ENCODE measurements at regions of chr19 and their contacts with region 1.

Region 1: GRCh38 chr19:46828484-46828883 is 22.2 kb downstream of the AP2S1 start:
- DNase-seq: no peak
- ATAC-seq: no peak
- H3K4me3 ChIP-seq: no peak overlapping the region
- H3K27ac ChIP-seq: no peak overlapping the region
- H3K4me1 ChIP-seq: no peaks in the 10 kb centered on the region
- H3K27me3 ChIP-seq: no peaks in the 10 kb centered on the region
- CTCF ChIP-seq: no peak

Region 2: DNA sequence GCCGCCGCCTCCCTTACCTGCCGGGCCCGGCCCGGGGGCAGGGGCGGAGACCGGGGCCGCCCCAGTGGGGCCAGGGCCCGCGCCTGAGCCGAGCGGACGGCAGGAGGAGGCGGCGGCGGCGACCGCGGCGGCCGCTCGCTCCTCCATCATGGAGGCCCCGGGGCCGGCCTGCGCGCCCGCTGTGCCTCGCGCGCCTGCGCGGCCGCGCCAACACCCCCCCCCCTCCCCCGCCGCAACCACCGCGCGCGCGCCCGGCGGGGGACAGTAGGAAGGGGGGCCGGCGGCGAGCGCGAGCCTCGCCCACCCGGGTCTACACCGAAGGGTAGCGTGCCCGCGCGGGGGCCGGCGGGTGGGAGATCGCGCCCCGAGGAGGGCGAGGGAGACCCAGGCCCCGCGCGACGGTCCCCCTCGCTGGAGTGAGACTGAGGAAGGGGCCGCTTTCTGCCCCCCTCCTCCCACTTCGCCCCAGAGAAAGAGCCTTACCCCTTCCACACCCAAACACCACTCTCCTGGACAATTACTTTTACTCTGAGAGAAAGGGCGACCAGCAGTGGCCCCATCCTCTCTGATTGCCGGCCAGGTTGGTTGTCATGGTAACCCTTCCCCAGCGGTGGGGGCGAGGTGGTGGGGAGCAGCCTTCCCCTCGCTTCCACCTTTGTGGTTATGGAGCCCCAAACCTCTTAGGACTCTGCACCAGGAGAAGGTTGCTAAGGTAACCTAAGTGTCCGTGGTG is 82.0 kb before region 1 on chr19 and contains the start of gene STRN4:
- CTCF ChIA-PET with region 1: no interaction called
- POLR2A ChIA-PET with region 1: interaction called, 12 read pairs
- in situ Hi-C with region 1: no loop called
- intact Hi-C with region 1: no loop called
- DNase-seq: no peak
- ATAC-seq: peak; percentile 79
- H3K4me3 ChIP-seq: peak within 1 kb of the TSS; percentile 82 to 92
- H3K27ac ChIP-seq: peak within 1 kb of the TSS; percentile 83
- H3K4me1 ChIP-seq: peaks cover 3% of the 10 kb centered on the region; the same call in 1 of the 2 replicates
- H3K27me3 ChIP-seq: no peaks in the 10 kb centered on the region
- CTCF ChIP-seq: no peak
- total RNA-seq, gene STRN4: 89.5 TPM

Measured in Panc1 (cell line).